Mammary epithelial cell (primary cell): ENCODE measurements at regions of chr1 and their contacts with region 1.

Region 1: DNA sequence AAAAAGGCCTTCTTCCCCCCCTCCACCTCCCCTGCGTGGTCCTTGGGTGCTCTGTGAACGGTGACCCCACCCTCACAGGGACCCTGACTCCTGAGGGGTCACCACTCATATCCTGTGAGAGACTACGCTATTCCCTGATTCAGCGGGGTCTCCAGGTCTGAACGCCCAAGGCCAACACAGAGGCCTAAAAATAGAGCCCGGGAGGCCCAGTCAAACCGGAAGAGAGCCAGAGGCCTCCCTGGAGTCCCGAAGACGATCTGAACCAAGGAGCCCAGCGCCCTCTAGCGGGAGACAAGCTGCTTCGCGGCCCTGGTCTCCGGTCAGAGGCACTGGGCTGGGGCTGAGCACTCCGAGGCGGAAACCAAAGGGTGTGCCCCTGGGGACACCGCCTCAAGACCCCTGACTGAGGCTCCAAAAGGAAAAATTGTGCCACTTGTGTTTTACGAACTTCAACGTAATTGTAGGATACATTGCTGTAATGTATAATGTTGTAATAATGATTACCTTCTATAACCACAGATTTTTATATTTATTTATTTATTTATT is 42.4 kb upstream of the PSEN2 start:
- DNase-seq: peak; percentile 73
- H3K4me3 ChIP-seq: no peak overlapping the region
- H3K27ac ChIP-seq: peak overlapping the region; percentile 29
- H3K4me1 ChIP-seq: peaks cover 8% of the 10 kb centered on the region
- H3K27me3 ChIP-seq: no peaks in the 10 kb centered on the region
- CTCF ChIP-seq: peak; percentile 87 to 99

Region 2: DNA sequence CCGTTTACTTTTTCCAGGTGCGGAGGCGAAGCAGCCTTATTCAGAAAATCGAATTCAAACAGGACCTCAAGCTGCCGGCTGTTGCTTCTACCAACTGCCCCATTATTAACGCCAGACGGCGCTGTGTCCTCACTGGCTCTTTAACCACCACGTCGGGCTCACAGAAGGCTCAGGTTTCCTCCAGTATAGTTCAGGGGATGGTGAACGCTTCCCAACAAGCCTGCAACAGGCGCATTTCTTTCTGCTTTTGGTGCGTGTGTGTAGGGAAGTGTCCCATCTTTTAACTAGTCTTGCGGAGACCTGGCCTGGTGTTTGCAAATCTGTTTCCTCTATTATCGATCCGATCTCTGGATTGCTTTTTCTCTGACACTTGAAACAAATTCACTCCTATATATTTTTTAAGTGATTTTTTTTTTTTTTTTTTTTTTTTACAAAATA is 280.3 kb before region 1 on chr1:
- CTCF ChIA-PET with region 1: no interaction called
- dilution Hi-C with region 1: no loop called
- in situ Hi-C with region 1: loop called in 1 of 2 experiments (anchors 10 kb)
- intact Hi-C with region 1: loop called (anchors 1 kb)
- DNase-seq: peak; percentile 81
- H3K4me3 ChIP-seq: no peak overlapping the region
- H3K27ac ChIP-seq: no peak overlapping the region
- H3K4me1 ChIP-seq: peaks cover 21% of the 10 kb centered on the region
- H3K27me3 ChIP-seq: peaks cover 12% of the 10 kb centered on the region
- CTCF ChIP-seq: peak; percentile 98 to 99

Region 3: GRCh38 chr1:226649780-226650179 is 178.3 kb before region 1 on chr1:
- CTCF ChIA-PET with region 1: no interaction called
- dilution Hi-C with region 1: no loop called
- in situ Hi-C with region 1: loop called in 1 of 2 experiments (anchors 10 kb)
- intact Hi-C with region 1: no loop called
- DNase-seq: no peak
- H3K4me3 ChIP-seq: no peak overlapping the region
- H3K27ac ChIP-seq: no peak overlapping the region
- H3K4me1 ChIP-seq: no peaks in the 10 kb centered on the region
- H3K27me3 ChIP-seq: no peaks in the 10 kb centered on the region
- CTCF ChIP-seq: peak in 1 of 2 donors; percentile 39

Region 4: GRCh38 chr1:226708342-226708780 is 119.7 kb before region 1 on chr1:
- CTCF ChIA-PET with region 1: no interaction called
- dilution Hi-C with region 1: no loop called
- in situ Hi-C with region 1: no loop called
- intact Hi-C with region 1: loop called (anchors 5 kb)
- DNase-seq: peak; percentile 91
- H3K4me3 ChIP-seq: no peak overlapping the region
- H3K27ac ChIP-seq: no peak overlapping the region
- H3K4me1 ChIP-seq: peaks cover 33% of the 10 kb centered on the region
- H3K27me3 ChIP-seq: no peaks in the 10 kb centered on the region
- CTCF ChIP-seq: no peak

Region 5: GRCh38 chr1:226786550-226786949 is 41.5 kb before region 1 on chr1:
- CTCF ChIA-PET with region 1: no interaction called
- dilution Hi-C with region 1: no loop called
- in situ Hi-C with region 1: no loop called
- intact Hi-C with region 1: no loop called
- DNase-seq: no peak
- H3K4me3 ChIP-seq: no peak overlapping the region
- H3K27ac ChIP-seq: no peak overlapping the region
- H3K4me1 ChIP-seq: no peaks in the 10 kb centered on the region
- H3K27me3 ChIP-seq: peaks cover 2% of the 10 kb centered on the region
- CTCF ChIP-seq: no peak

Region 6: GRCh38 chr1:226814751-226815496 is 13.1 kb before region 1 on chr1:
- CTCF ChIA-PET with region 1: interaction called, 19 read pairs
- dilution Hi-C with region 1: no loop called
- in situ Hi-C with region 1: no loop called
- intact Hi-C with region 1: no loop called
- DNase-seq: peak; percentile 89
- H3K4me3 ChIP-seq: no peak overlapping the region
- H3K27ac ChIP-seq: peak overlapping the region; percentile 68
- H3K4me1 ChIP-seq: peaks cover 32% of the 10 kb centered on the region
- H3K27me3 ChIP-seq: no peaks in the 10 kb centered on the region
- CTCF ChIP-seq: no peak